ENCODE measurements at regions of chr19 and their contacts with region 1.

Region 1: GRCh38 chr19:46529622-46530462 is 34.2 kb upstream of the PNMA8B start:
- H3K4me3 Mint-ChIP-seq: peak overlapping the region; percentile 30
- H3K27ac Mint-ChIP-seq: peak overlapping the region; percentile 93
- H3K4me1 Mint-ChIP-seq: peaks cover 58% of the 10 kb centered on the region
- H3K27me3 Mint-ChIP-seq: peaks cover 25% of the 10 kb centered on the region

Region 2: DNA sequence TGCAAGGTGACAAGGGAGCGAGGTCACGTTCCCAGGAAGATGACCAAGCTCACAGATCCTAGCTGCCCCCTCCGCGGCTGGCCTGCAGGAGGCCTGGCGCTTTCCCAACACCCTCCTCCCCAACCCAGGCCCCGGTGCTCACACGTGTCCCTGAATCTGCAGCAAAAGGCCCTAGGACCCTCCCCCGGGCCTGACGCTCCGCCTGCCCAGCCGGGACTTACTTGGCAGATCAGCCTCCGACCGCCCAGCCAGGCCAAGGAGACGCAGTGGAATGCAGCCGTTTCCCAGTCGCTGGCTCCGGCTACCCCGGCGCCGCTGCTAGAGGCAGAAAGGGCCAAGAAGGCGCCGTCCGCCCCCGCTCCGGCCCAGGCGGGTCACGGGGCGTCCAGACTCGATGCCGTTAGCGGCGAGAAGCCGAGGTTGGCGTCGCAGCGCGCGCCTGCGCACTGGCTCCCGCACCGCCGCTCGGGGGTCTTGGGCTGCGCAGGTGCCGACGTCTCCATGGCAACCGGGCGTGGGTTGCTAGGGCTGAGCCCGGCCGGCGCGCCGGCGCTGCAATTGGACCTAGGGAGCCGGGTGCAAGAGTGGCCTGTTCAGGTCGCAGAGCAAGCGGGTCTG is 58.6 kb before region 1 on chr19 and contains the start of gene PNMA8A:
- intact Hi-C with region 1: no loop called
- H3K4me3 Mint-ChIP-seq: no peak within 1 kb of the TSS
- H3K27ac Mint-ChIP-seq: no peak within 1 kb of the TSS
- H3K4me1 Mint-ChIP-seq: peaks cover 10% of the 10 kb centered on the region
- H3K27me3 Mint-ChIP-seq: peaks cover 68% of the 10 kb centered on the region

Region 3: DNA sequence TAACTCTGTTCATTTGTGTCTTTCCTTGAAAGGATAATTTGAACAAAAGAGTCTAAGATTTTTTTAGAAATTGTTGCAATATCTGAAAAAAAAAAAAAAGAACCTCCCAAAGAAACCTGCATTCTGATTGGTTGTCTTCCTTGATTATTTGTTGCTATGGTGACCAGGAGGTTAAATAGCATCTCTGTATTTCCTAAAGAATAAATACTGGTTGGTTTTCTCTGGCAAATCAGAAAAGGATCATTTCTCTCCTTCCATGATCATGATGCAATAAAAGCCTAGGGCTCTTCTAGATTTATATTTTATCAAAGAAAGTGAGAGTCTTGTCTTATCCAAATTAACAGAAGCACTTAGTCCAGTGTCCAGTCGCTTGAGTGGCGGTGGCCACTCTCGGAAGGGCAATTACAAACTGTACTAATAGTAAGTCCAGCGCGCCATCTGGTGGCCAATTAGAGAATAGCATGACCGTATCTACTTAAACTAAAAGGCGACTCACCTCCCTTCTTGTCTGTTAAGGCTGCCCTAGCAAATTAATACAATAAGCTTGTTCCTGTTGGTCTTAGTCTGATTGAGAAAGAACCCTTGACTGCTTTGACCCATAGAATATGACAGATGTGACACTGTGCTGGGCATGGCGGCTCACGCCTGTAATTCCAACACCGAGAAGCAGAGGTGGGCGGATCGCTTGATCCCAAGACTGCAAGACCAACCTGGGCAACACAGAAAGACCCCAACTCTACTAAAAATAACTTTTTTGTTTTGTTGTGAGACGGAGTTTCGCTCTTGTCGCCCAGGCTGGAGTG is 12.8 kb after region 1 on chr19:
- intact Hi-C with region 1: loop called (anchors 1 kb)
- H3K4me3 Mint-ChIP-seq: no peak overlapping the region
- H3K27ac Mint-ChIP-seq: no peak overlapping the region
- H3K4me1 Mint-ChIP-seq: peaks cover 30% of the 10 kb centered on the region
- H3K27me3 Mint-ChIP-seq: peaks cover 1% of the 10 kb centered on the region

Region 4: GRCh38 chr19:46571531-46571930 is 41.7 kb after region 1 on chr19:
- intact Hi-C with region 1: loop called (anchors 1 kb)
- H3K4me3 Mint-ChIP-seq: no peak overlapping the region
- H3K27ac Mint-ChIP-seq: no peak overlapping the region
- H3K4me1 Mint-ChIP-seq: peaks cover 18% of the 10 kb centered on the region
- H3K27me3 Mint-ChIP-seq: peaks cover 10% of the 10 kb centered on the region

Region 5: DNA sequence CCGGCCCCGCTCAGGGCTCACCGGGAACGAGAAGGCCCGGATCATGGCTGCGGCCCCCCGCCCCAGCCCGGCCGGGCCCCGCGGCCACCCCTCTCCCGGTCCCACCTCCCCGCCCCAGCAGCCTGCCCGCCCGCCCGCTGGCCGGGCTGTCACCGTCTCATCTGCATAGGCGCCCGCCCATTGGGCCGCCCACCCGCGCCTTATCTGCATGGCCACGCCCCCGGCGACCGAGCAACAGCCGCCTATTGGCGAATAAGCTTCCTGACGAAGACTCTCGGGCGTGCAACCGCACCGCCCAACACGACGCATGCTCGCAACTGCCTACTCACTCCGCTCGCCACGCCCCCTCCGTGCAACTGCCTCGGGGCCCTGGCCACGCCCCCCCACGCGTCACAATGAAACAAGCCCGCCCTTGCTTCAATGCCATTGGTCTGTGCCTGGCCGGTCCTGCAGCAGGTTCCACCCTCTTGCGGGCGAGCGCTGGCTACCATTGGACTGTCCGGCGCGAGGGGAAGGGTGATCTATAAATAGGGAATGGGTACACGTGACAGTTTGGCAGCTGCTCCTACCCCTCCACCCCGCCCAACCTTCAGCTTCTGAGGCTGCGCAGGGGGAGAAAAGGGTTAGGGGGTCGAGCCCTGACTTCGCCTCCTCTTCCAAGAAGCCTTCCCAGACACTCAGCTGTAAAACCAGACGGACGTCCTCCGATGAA is 131.3 kb after region 1 on chr19 and contains the start of gene DACT3:
- intact Hi-C with region 1: loop called (anchors 5 kb)
- H3K4me3 Mint-ChIP-seq: peak within 1 kb of the TSS; percentile 67
- H3K27ac Mint-ChIP-seq: peak within 1 kb of the TSS; percentile 57
- H3K4me1 Mint-ChIP-seq: peaks cover 34% of the 10 kb centered on the region
- H3K27me3 Mint-ChIP-seq: peaks cover 56% of the 10 kb centered on the region

Region 6: DNA sequence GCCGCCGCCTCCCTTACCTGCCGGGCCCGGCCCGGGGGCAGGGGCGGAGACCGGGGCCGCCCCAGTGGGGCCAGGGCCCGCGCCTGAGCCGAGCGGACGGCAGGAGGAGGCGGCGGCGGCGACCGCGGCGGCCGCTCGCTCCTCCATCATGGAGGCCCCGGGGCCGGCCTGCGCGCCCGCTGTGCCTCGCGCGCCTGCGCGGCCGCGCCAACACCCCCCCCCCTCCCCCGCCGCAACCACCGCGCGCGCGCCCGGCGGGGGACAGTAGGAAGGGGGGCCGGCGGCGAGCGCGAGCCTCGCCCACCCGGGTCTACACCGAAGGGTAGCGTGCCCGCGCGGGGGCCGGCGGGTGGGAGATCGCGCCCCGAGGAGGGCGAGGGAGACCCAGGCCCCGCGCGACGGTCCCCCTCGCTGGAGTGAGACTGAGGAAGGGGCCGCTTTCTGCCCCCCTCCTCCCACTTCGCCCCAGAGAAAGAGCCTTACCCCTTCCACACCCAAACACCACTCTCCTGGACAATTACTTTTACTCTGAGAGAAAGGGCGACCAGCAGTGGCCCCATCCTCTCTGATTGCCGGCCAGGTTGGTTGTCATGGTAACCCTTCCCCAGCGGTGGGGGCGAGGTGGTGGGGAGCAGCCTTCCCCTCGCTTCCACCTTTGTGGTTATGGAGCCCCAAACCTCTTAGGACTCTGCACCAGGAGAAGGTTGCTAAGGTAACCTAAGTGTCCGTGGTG is 216.6 kb after region 1 on chr19 and contains the start of gene STRN4:
- intact Hi-C with region 1: no loop called
- H3K4me3 Mint-ChIP-seq: peak within 1 kb of the TSS; percentile 100
- H3K27ac Mint-ChIP-seq: peak within 1 kb of the TSS; percentile 94
- H3K4me1 Mint-ChIP-seq: peaks cover 65% of the 10 kb centered on the region
- H3K27me3 Mint-ChIP-seq: no peaks in the 10 kb centered on the region

Region 7: DNA sequence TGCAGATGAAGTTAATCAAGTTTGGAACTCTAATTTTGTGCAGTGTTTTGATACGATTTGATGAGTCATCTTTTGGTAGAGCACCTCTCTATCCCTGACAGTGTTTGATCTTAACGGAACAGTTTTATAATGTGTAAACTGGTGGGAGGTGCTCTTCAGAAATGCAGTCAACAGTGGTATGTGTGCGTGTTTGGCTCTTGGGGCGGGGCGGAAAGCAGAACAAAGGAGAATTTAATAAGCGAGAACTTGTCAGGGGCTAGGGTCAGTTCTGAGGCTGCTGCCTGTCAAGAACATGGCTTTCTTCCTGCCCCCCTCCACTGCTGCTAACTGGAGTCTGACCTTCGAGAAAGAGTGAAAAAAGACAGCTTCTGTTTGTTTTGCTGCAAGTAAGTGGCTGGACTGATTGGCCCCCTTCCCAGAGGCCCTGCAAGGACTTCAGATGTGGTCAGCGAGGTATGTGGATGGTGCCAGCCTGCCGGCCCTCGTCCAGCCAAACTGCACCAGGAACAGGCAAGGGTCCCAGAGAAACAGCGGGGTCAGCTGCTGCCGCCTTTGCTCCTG is 660.4 kb after region 1 on chr19:
- intact Hi-C with region 1: no loop called
- H3K4me3 Mint-ChIP-seq: no peak overlapping the region
- H3K27ac Mint-ChIP-seq: no peak overlapping the region
- H3K4me1 Mint-ChIP-seq: no peaks in the 10 kb centered on the region
- H3K27me3 Mint-ChIP-seq: no peaks in the 10 kb centered on the region